GM12878 (cell line): ENCODE measurements at regions of chr12 and their contacts with region 1.

Region 1: DNA sequence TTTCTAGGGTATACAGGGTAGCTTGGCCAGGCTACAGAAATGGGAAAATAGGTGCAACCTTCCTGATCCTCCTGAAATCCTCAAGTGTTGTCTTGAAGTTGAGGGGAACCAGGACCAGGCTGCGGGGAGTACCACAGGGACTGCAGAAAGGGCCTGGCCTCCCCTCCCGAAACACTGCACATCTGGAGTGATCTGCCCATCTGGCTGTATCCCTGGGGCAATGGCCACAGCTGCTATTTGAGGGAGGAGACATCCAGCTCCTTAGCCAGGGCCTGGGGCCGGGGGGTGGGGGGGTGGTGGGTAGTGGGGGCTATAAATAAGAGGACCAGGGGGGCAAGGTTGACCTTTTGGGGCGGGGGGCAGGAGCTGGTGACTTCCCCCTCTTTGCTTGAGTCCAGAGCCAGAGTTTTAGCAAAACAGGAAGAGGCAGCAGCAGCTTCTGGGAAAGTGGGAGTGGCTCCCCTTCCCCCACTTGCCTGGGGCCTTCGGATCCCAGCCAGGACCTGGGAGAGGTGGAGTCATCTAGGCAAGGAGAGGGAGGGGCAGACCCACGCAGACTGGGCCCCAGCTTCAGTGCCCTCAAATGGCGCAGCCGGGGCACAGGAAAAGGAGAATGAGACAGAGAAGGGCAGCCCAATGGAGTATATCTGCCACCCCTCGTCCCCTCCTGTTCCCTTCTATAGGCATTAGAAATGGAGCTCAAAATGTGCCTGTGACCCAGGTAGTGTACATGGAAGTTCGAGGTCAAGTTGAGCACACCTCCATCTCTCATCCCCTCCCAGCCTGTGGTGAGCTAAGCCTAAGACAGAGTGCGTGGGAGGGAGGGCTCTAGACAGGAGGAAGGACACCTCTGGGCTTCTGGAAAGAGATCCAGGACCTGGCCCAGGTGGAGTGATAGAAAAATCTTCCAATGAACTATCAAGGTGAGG is 9.2 kb upstream of the HDAC7 start:
- DNase-seq: no peak
- ATAC-seq: no peak
- H3K4me3 ChIP-seq: no peak overlapping the region
- H3K27ac ChIP-seq: no peak overlapping the region
- H3K4me1 ChIP-seq: peaks cover 42% of the 10 kb centered on the region
- H3K27me3 ChIP-seq: no peaks in the 10 kb centered on the region; a peak in 1 of 4 replicates
- CTCF ChIP-seq: no peak
- EP300 ChIP-seq: no peak
- POLR2A ChIP-seq: no peak
- RAD21 ChIP-seq: no peak

Region 2: GRCh38 chr12:46998811-46999368 is 830.0 kb before region 1 on chr12:
- CTCF ChIA-PET with region 1: no interaction called
- POLR2A ChIA-PET with region 1: no interaction called
- RAD21 ChIA-PET with region 1: no interaction called
- SMC1A ChIA-PET with region 1: no interaction called
- in situ Hi-C with region 1: no loop called
- intact Hi-C with region 1: no loop called
- DNase-seq: no peak
- ATAC-seq: no peak
- H3K4me3 ChIP-seq: no peak overlapping the region
- H3K27ac ChIP-seq: no peak overlapping the region
- H3K4me1 ChIP-seq: no peaks in the 10 kb centered on the region
- H3K27me3 ChIP-seq: no peaks in the 10 kb centered on the region
- CTCF ChIP-seq: no peak
- EP300 ChIP-seq: no peak
- POLR2A ChIP-seq: no peak
- RAD21 ChIP-seq: no peak

Region 3: DNA sequence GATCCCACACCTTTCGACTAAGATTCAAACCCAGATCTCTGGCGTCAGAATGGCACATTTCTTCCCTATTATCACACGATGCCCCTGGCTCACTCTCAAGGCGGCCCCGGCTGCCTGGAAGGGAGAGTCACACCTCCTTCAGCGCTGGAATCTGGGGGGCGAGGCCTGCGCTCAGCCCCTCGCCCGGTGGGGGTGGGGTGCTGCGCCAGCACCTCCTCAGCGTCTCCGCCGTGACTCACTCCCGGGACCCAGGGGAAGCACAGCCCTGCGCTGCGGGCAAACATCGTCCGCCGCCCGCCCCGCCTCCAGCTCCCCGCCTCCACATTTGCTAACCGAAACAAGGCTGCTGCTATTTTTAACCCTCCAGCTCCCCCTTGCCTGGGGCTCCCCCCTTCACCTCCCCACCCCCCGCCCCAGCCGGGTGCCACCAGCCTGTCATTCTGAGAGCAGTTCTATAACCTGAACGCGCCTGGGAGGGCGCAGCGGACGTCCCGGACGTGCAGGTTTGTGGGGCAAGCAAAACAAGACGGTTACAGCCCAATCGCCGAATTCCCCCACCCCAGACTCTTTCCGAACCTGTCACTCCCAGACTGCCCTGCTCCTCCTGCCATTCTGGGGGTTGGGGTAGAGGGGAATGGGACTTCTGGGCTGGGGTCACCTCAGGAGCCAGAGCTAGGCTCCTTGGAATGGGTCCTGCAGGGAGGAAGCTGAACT is 15.9 kb before region 1 on chr12:
- CTCF ChIA-PET with region 1: interaction called, 108 read pairs
- POLR2A ChIA-PET with region 1: interaction called, 46 read pairs
- RAD21 ChIA-PET with region 1: interaction called, 202 read pairs
- SMC1A ChIA-PET with region 1: interaction called, 24 read pairs
- in situ Hi-C with region 1: no loop called
- intact Hi-C with region 1: no loop called
- DNase-seq: peak; percentile 73
- ATAC-seq: peak; percentile 83
- H3K4me3 ChIP-seq: peak overlapping the region; percentile 75
- H3K27ac ChIP-seq: peak overlapping the region; percentile 85
- H3K4me1 ChIP-seq: peaks cover 80% of the 10 kb centered on the region
- H3K27me3 ChIP-seq: no peaks in the 10 kb centered on the region; a peak in 2 of 4 replicates
- CTCF ChIP-seq: peak in 1 of 3 experiments; percentile 25; a peak in 2 of 6 replicates
- EP300 ChIP-seq: peak; percentile 16 to 31; a peak in 1 of 4 replicates
- POLR2A ChIP-seq: peak; percentile 88
- RAD21 ChIP-seq: peak; percentile 35; the same call in 1 of the 2 replicates

Region 4: GRCh38 chr12:47910486-47910885 is 81.6 kb after region 1 on chr12:
- CTCF ChIA-PET with region 1: no interaction called
- POLR2A ChIA-PET with region 1: no interaction called
- RAD21 ChIA-PET with region 1: no interaction called
- SMC1A ChIA-PET with region 1: no interaction called
- in situ Hi-C with region 1: no loop called
- intact Hi-C with region 1: no loop called
- DNase-seq: no peak
- ATAC-seq: no peak
- H3K4me3 ChIP-seq: no peak overlapping the region
- H3K27ac ChIP-seq: no peak overlapping the region
- H3K4me1 ChIP-seq: no peaks in the 10 kb centered on the region
- H3K27me3 ChIP-seq: peaks cover 2 to 4% of the 10 kb centered on the region in 2 experiments; a peak in 2 of 4 replicates
- CTCF ChIP-seq: no peak
- EP300 ChIP-seq: no peak
- POLR2A ChIP-seq: no peak
- RAD21 ChIP-seq: no peak

Region 5: GRCh38 chr12:47935184-47935583 is 106.3 kb after region 1 on chr12:
- CTCF ChIA-PET with region 1: no interaction called
- POLR2A ChIA-PET with region 1: no interaction called
- RAD21 ChIA-PET with region 1: no interaction called
- SMC1A ChIA-PET with region 1: no interaction called
- in situ Hi-C with region 1: no loop called
- intact Hi-C with region 1: no loop called
- DNase-seq: no peak
- ATAC-seq: no peak
- H3K4me3 ChIP-seq: no peak overlapping the region
- H3K27ac ChIP-seq: no peak overlapping the region
- H3K4me1 ChIP-seq: no peaks in the 10 kb centered on the region
- H3K27me3 ChIP-seq: peaks cover under 1 to 7% of the 10 kb centered on the region in 2 experiments
- CTCF ChIP-seq: no peak
- EP300 ChIP-seq: no peak
- POLR2A ChIP-seq: no peak
- RAD21 ChIP-seq: no peak